CD8-positive, alpha-beta T cell (primary cell): ENCODE measurements at regions of chr6 and their contacts with region 1.

Region 1: DNA sequence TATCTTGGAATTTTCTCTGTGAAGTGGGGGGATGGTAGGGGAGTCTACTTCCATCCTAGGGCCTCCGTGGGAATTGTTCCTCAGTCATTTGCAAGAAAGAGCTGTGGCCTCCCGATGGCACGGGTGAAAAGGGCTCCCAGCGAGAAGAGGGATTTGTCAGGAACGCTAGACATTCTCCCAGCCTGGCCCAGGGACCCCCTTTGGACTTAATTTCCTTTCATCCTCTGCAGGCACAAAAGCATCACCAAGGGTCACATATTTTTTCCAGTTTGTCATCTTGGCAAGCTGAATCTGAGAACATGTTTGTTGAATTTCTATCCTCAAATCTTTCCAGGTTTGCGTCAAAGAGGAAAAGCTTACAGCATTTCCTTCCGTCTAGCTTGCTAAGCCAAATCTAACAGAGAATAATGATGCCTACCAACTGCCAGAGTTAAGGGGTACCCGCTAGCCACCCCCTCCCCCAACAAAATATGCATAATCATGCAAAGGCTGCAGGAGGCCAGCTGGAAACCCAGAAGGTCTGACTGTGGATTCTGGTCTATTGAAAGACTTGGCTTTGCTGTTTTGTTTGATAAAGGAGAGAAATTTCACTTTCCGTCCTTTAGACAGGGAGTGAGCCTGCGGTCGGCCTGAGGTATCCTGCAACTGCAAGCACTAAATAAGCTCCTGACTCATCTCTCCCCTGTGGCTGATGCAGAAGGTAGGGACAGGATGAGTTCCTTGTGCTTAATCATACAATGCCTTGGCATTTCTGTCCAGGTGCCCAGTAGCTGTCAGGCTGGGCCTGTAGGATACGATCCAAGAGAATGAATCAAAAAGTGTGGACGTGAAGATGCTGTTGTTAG is 23.1 kb downstream of the PSMG4 start:
- DNase-seq: no peak
- ATAC-seq: no peak
- H3K4me3 ChIP-seq: no peak overlapping the region
- H3K4me3 Mint-ChIP-seq: no peak overlapping the region
- H3K27ac ChIP-seq: no peak overlapping the region
- H3K27ac Mint-ChIP-seq: no peak overlapping the region
- H3K4me1 ChIP-seq: no peaks in the 10 kb centered on the region
- H3K4me1 Mint-ChIP-seq: peaks cover 3% of the 10 kb centered on the region
- H3K27me3 ChIP-seq: no peaks in the 10 kb centered on the region
- H3K27me3 Mint-ChIP-seq: no peaks in the 10 kb centered on the region
- CTCF ChIP-seq: no peak

Region 2: GRCh38 chr6:3269281-3269975 is 12.4 kb before region 1 on chr6:
- CTCF ChIA-PET with region 1: interaction called, 18 read pairs
- POLR2A ChIA-PET with region 1: no interaction called
- intact Hi-C with region 1: no loop called
- DNase-seq: no peak
- ATAC-seq: no peak
- H3K4me3 ChIP-seq: no peak overlapping the region
- H3K4me3 Mint-ChIP-seq: no peak overlapping the region
- H3K27ac ChIP-seq: no peak overlapping the region
- H3K27ac Mint-ChIP-seq: peak overlapping the region; percentile 14
- H3K4me1 ChIP-seq: peaks cover under 1% of the 10 kb centered on the region
- H3K4me1 Mint-ChIP-seq: peaks cover 30% of the 10 kb centered on the region
- H3K27me3 ChIP-seq: no peaks in the 10 kb centered on the region
- H3K27me3 Mint-ChIP-seq: no peaks in the 10 kb centered on the region
- CTCF ChIP-seq: no peak

Region 3: GRCh38 chr6:3356056-3356761 is 74.4 kb after region 1 on chr6:
- CTCF ChIA-PET with region 1: no interaction called
- POLR2A ChIA-PET with region 1: no interaction called
- intact Hi-C with region 1: loop called in 1 of 2 experiments (anchors 5 kb)
- DNase-seq: peak; percentile 35 to 90 (median 66)
- ATAC-seq: peak; percentile 87
- H3K4me3 ChIP-seq: peak overlapping the region; percentile 51 to 58
- H3K4me3 Mint-ChIP-seq: peak overlapping the region; percentile 81
- H3K27ac ChIP-seq: peak overlapping the region; percentile 48 to 79
- H3K27ac Mint-ChIP-seq: peak overlapping the region; percentile 90
- H3K4me1 ChIP-seq: peaks cover 27% of the 10 kb centered on the region
- H3K4me1 Mint-ChIP-seq: peaks cover 33% of the 10 kb centered on the region
- H3K27me3 ChIP-seq: no peaks in the 10 kb centered on the region
- H3K27me3 Mint-ChIP-seq: no peaks in the 10 kb centered on the region
- CTCF ChIP-seq: no peak

Region 4: GRCh38 chr6:3456755-3457466 is 175.1 kb after region 1 on chr6 and contains the start of gene SLC22A23:
- CTCF ChIA-PET with region 1: interaction called, 4 read pairs
- POLR2A ChIA-PET with region 1: no interaction called
- intact Hi-C with region 1: loop called (anchors 1 kb)
- DNase-seq: peak; percentile 50 to 84 (median 74)
- ATAC-seq: peak; percentile 61
- H3K4me3 ChIP-seq: peak within 1 kb of the TSS; percentile 47 to 52
- H3K4me3 Mint-ChIP-seq: peak within 1 kb of the TSS; percentile 83
- H3K27ac ChIP-seq: no peak within 1 kb of the TSS
- H3K27ac Mint-ChIP-seq: peak within 1 kb of the TSS; percentile 58
- H3K4me1 ChIP-seq: peaks cover 22% of the 10 kb centered on the region
- H3K4me1 Mint-ChIP-seq: peaks cover 6% of the 10 kb centered on the region
- H3K27me3 ChIP-seq: peaks cover 0 to 24% of the 10 kb centered on the region in 2 experiments
- H3K27me3 Mint-ChIP-seq: peaks cover 14% of the 10 kb centered on the region
- CTCF ChIP-seq: peak; percentile 68
- total RNA-seq, gene SLC22A23: 3.4 to 4.8 TPM

Region 5: GRCh38 chr6:3732345-3733141 is 450.7 kb after region 1 on chr6:
- CTCF ChIA-PET with region 1: interaction called, 129 read pairs
- POLR2A ChIA-PET with region 1: interaction called, 4 read pairs
- intact Hi-C with region 1: loop called in 1 of 2 experiments (anchors 1 kb)
- DNase-seq: peak; percentile 29 to 83 (median 68)
- ATAC-seq: peak; percentile 76
- H3K4me3 ChIP-seq: no peak overlapping the region
- H3K4me3 Mint-ChIP-seq: no peak overlapping the region
- H3K27ac ChIP-seq: no peak overlapping the region
- H3K27ac Mint-ChIP-seq: no peak overlapping the region
- H3K4me1 ChIP-seq: no peaks in the 10 kb centered on the region
- H3K4me1 Mint-ChIP-seq: peaks cover 2% of the 10 kb centered on the region
- H3K27me3 ChIP-seq: no peaks in the 10 kb centered on the region
- H3K27me3 Mint-ChIP-seq: peaks cover 11% of the 10 kb centered on the region
- CTCF ChIP-seq: peak; percentile 66

Region 6: DNA sequence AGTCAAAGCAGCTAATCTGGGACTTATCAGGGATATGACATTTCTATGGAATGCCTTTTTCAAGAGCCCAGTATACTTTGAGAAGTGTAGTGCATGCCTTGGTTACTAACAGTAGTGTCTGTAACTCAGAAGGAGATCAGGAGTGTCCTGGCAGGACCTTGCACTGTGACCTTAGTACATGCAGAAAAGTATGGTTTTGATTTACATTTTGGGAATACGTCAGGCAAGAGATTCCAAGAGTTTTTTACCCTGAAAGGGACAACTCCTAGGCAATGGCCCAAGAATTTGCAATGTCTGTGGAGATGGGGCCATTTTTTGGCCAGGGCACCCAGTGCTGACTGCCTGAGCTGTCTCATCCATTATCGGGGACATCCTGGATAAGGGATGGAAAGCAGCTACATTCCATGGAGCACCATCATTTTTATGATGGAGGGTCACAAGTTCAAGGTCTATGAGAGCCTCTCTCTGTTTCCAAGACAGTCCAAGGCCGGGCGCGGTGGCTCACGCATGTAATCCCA is 647.5 kb after region 1 on chr6:
- CTCF ChIA-PET with region 1: interaction called, 4 read pairs
- POLR2A ChIA-PET with region 1: interaction called, 3 read pairs
- intact Hi-C with region 1: loop called in 1 of 2 experiments (anchors 5 kb)
- DNase-seq: no peak
- ATAC-seq: no peak
- H3K4me3 ChIP-seq: no peak overlapping the region
- H3K4me3 Mint-ChIP-seq: no peak overlapping the region
- H3K27ac ChIP-seq: no peak overlapping the region
- H3K27ac Mint-ChIP-seq: no peak overlapping the region
- H3K4me1 ChIP-seq: no peaks in the 10 kb centered on the region
- H3K4me1 Mint-ChIP-seq: no peaks in the 10 kb centered on the region
- H3K27me3 ChIP-seq: no peaks in the 10 kb centered on the region
- H3K27me3 Mint-ChIP-seq: peaks cover 10% of the 10 kb centered on the region
- CTCF ChIP-seq: no peak

Region 7: DNA sequence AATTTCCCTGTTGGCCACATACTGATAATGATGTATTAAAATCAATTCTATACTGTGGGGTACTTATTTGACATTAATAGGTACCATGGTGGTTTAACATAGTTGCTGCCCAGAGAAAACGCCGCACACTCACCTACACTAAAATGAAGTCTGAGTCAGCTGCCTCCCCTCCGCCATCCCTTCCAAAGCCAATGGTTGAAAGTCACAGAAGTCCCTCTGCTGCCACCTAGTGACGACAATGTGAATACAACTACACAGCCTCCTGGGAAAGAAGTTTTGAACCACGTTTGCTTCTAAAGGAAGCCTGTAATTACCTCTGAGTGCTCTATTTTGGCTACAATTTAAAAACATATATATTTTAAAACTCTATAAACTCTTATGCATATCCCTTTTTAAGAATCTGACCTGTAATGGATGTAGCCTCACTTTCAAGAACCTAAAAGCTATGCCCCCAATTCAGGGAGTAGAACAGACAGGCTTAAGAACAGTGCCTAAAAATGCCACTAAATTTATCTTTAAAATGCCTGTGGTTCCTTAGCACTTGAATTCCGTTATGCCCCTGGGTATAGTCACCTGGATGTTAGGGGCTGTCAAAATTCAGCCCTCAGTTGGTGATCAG is 874.1 kb after region 1 on chr6:
- CTCF ChIA-PET with region 1: interaction called, 3 read pairs
- POLR2A ChIA-PET with region 1: no interaction called
- intact Hi-C with region 1: loop called in 1 of 2 experiments (anchors 1 kb)
- DNase-seq: peak; percentile 53 to 88 (median 77)
- ATAC-seq: peak; percentile 99
- H3K4me3 ChIP-seq: no peak overlapping the region
- H3K4me3 Mint-ChIP-seq: no peak overlapping the region
- H3K27ac ChIP-seq: no peak overlapping the region
- H3K27ac Mint-ChIP-seq: no peak overlapping the region
- H3K4me1 ChIP-seq: no peaks in the 10 kb centered on the region
- H3K4me1 Mint-ChIP-seq: peaks cover 3% of the 10 kb centered on the region
- H3K27me3 ChIP-seq: no peaks in the 10 kb centered on the region
- H3K27me3 Mint-ChIP-seq: peaks cover 4% of the 10 kb centered on the region
- CTCF ChIP-seq: peak; percentile 92